Activated CD8-positive, alpha-beta T cell treated with anti-CD3 and anti-CD28 coated beads for 36 hours (primary cell): ENCODE measurements at regions of chr2 and their contacts with region 1.

Region 1: DNA sequence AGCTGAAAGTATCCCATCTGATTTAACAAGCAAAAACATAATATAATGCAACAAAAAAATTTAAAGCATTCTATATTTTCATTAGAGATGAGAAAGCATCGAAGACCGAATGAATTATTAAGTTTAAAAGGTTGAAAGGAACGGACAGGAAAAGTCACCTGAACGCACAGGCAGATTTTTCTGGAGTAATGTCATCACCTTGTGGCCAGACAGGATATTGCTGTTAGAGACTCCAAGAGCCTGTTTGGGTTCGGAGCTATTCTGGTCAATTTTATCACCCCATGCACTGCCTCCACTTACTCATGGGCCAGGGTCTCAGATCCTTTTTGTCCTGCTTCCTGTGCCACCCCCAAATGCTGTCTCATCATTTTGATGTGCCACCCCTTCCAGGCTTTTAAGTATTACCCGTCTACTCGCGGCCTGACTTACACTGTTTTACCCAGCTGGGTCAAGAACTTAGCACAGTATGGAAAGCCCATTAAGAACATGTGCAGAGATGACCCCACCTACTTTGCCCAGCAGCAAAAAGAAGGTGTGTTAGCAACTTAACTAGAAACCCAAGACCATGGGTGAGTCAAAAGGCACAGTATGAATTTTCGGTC is 27.3 kb downstream of the GKN2 start:
- DNase-seq: peak; percentile 67
- ATAC-seq: peak; percentile 87
- H3K4me3 Mint-ChIP-seq: no peak overlapping the region
- H3K27ac Mint-ChIP-seq: no peak overlapping the region
- H3K4me1 Mint-ChIP-seq: peaks cover 1% of the 10 kb centered on the region
- H3K27me3 Mint-ChIP-seq: peaks cover 2% of the 10 kb centered on the region
- CTCF ChIP-seq: peak; percentile 97

Region 2: DNA sequence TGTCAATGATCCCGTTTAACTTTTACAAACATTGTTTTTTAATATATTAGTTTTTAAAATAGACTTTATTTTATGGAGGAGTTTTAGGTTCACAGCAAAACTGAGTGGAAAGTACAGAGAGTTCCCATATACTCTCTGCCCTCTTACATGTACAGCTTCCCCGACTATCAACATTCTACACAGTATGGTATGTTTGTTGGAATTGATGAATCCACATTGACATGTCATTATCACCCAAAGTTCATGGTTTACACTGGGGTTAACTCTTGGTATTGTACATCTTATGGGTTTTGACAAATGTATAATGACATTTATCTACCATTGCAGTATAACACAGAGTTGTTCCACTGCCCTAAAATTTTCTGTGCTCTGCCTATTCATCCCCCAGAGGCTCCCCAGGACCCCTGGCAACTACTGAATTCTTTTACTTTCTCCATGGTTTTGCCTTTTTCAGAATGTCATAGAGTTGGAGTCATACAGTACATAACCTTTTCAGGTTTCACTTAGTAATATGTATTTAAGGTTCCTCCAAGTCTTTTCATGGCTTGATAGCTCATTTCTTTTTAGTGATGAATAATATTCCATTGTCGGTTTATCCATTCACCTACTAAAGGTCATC is 452.5 kb before region 1 on chr2:
- CTCF ChIA-PET with region 1: interaction called, 139 read pairs
- POLR2A ChIA-PET with region 1: no interaction called
- intact Hi-C with region 1: no loop called
- DNase-seq: no peak
- ATAC-seq: peak; percentile 55
- H3K4me3 Mint-ChIP-seq: no peak overlapping the region
- H3K27ac Mint-ChIP-seq: no peak overlapping the region
- H3K4me1 Mint-ChIP-seq: peaks cover 26% of the 10 kb centered on the region
- H3K27me3 Mint-ChIP-seq: no peaks in the 10 kb centered on the region
- CTCF ChIP-seq: no peak

Region 3: DNA sequence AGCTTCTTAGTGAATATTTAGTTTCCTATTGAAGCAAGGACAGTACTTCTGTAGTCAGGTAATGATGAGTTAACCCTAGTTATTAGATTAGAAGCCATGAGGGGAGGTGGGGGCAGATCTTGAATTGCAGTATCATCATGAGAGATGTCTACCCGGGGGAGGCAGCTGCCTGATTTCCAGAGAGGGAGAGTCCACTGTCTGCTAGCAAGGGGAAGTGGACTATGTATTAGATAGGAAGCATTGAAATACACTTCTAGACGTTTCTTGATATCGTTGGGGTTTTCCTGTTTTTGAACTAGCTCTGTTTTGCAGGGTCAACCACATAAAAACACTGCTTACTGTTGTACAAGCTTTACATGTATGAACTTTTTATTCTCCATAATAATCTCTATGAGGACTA is 419.2 kb before region 1 on chr2:
- CTCF ChIA-PET with region 1: interaction called, 15 read pairs
- POLR2A ChIA-PET with region 1: no interaction called
- intact Hi-C with region 1: no loop called
- DNase-seq: no peak
- ATAC-seq: no peak
- H3K4me3 Mint-ChIP-seq: no peak overlapping the region
- H3K27ac Mint-ChIP-seq: peak overlapping the region; percentile 0
- H3K4me1 Mint-ChIP-seq: peaks cover 15% of the 10 kb centered on the region
- H3K27me3 Mint-ChIP-seq: no peaks in the 10 kb centered on the region
- CTCF ChIP-seq: no peak

Region 4: DNA sequence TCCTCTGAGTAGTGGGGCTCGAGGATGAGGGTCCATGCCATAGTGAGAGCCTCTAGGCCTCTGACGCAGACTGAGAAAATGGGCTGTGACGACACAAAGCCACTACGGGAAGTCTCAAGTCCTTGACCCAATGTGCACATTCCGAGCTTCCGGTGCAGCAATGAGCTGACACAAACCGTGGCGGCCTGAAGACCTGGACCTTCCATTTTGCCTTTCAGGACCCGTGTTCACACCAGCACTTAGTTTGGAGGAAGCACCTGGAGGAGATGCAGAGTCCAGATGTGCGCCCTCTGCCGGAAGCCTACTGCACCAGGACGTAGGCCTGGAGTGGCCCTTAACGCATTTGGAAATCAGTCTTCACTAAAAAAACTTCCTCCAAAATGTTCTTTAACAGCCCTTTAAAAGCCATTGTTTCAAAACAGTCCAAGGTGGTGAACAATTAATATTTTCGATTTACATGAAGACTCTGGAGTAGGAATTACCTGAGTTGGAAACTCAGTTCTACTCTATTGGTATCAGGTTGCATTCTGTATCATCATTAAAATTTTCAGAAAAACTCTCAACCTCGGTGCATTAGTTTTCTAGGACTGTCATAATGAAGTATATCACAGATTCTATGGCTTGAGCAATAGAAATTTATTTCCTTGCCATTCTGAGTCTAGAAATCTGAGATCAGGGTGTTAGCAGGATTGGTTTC is 88.1 kb before region 1 on chr2:
- CTCF ChIA-PET with region 1: interaction called, 50 read pairs
- POLR2A ChIA-PET with region 1: no interaction called
- intact Hi-C with region 1: loop called (anchors 5 kb)
- DNase-seq: peak; percentile 85
- ATAC-seq: peak; percentile 55
- H3K4me3 Mint-ChIP-seq: no peak overlapping the region
- H3K27ac Mint-ChIP-seq: peak overlapping the region; percentile 43
- H3K4me1 Mint-ChIP-seq: peaks cover 37% of the 10 kb centered on the region
- H3K27me3 Mint-ChIP-seq: no peaks in the 10 kb centered on the region
- CTCF ChIP-seq: peak; percentile 84

Region 5: GRCh38 chr2:68909793-68910674 is 15.4 kb before region 1 on chr2:
- CTCF ChIA-PET with region 1: interaction called, 39 read pairs
- POLR2A ChIA-PET with region 1: interaction called, 4 read pairs
- intact Hi-C with region 1: no loop called
- DNase-seq: peak; percentile 92
- ATAC-seq: peak; percentile 45
- H3K4me3 Mint-ChIP-seq: no peak overlapping the region
- H3K27ac Mint-ChIP-seq: peak overlapping the region; percentile 60
- H3K4me1 Mint-ChIP-seq: peaks cover 35% of the 10 kb centered on the region
- H3K27me3 Mint-ChIP-seq: no peaks in the 10 kb centered on the region
- CTCF ChIP-seq: peak; percentile 91

Region 6: GRCh38 chr2:68943581-68944568 is 18.5 kb after region 1 on chr2:
- CTCF ChIA-PET with region 1: interaction called, 38 read pairs
- POLR2A ChIA-PET with region 1: no interaction called
- intact Hi-C with region 1: no loop called
- DNase-seq: peak; percentile 63
- ATAC-seq: peak; percentile 87
- H3K4me3 Mint-ChIP-seq: no peak overlapping the region
- H3K27ac Mint-ChIP-seq: no peak overlapping the region
- H3K4me1 Mint-ChIP-seq: no peaks in the 10 kb centered on the region
- H3K27me3 Mint-ChIP-seq: peaks cover 21% of the 10 kb centered on the region
- CTCF ChIP-seq: peak; percentile 87

Region 7: GRCh38 chr2:69163109-69163508 is 237.7 kb after region 1 on chr2:
- CTCF ChIA-PET with region 1: no interaction called
- POLR2A ChIA-PET with region 1: no interaction called
- intact Hi-C with region 1: no loop called
- DNase-seq: no peak
- ATAC-seq: no peak
- H3K4me3 Mint-ChIP-seq: no peak overlapping the region
- H3K27ac Mint-ChIP-seq: no peak overlapping the region
- H3K4me1 Mint-ChIP-seq: no peaks in the 10 kb centered on the region
- H3K27me3 Mint-ChIP-seq: peaks cover 5% of the 10 kb centered on the region
- CTCF ChIP-seq: no peak